Panc1 (cell line): ENCODE measurements at regions of chr9 and their contacts with region 1.

Region 1: DNA sequence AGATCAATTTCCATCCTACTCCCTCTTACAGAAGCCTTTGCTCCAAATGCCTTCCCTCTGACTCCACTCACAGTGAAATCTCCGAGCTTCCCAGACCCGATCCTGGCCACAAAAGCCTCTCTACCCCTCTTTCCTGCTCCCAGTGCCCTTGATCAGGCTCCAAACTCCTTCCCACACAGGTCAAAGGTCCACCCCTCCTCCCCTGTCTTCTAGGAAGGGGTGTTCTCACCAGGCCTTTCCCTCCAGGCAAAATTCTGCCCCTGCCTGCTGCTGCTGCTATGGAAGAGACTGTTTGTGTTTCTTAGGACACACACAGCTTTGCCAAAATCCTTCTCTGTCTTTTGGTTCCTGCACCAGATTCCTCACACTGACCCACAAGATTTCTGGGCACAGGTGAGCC is 85.8 kb upstream of the ALDH1A1 start:
- DNase-seq: no peak
- ATAC-seq: no peak
- H3K4me3 ChIP-seq: no peak overlapping the region
- H3K27ac ChIP-seq: no peak overlapping the region
- H3K4me1 ChIP-seq: no peaks in the 10 kb centered on the region
- H3K27me3 ChIP-seq: no peaks in the 10 kb centered on the region
- CTCF ChIP-seq: no peak

Region 2: GRCh38 chr9:72788966-72789735 is 249.5 kb before region 1 on chr9:
- CTCF ChIA-PET with region 1: no interaction called
- POLR2A ChIA-PET with region 1: no interaction called
- in situ Hi-C with region 1: no loop called
- intact Hi-C with region 1: no loop called
- DNase-seq: no peak
- ATAC-seq: no peak
- H3K4me3 ChIP-seq: no peak overlapping the region
- H3K27ac ChIP-seq: no peak overlapping the region
- H3K4me1 ChIP-seq: no peaks in the 10 kb centered on the region
- H3K27me3 ChIP-seq: no peaks in the 10 kb centered on the region
- CTCF ChIP-seq: no peak

Region 3: GRCh38 chr9:72948906-72949582 is 89.6 kb before region 1 on chr9:
- CTCF ChIA-PET with region 1: no interaction called
- POLR2A ChIA-PET with region 1: no interaction called
- in situ Hi-C with region 1: no loop called
- intact Hi-C with region 1: loop called (anchors 10 kb)
- DNase-seq: no peak
- ATAC-seq: no peak
- H3K4me3 ChIP-seq: no peak overlapping the region
- H3K27ac ChIP-seq: no peak overlapping the region
- H3K4me1 ChIP-seq: no peaks in the 10 kb centered on the region
- H3K27me3 ChIP-seq: no peaks in the 10 kb centered on the region
- CTCF ChIP-seq: no peak